CD4-positive, alpha-beta memory T cell (primary cell): ENCODE measurements at regions of chr19 and their contacts with region 1.

Region 1: GRCh38 chr19:8513687-8514504 is at the start of gene ZNF414:
- DNase-seq: peak; percentile 94 to 99 (median 97)
- H3K4me3 ChIP-seq: peak within 1 kb of the TSS; percentile 34 to 82
- H3K4me3 Mint-ChIP-seq: peak within 1 kb of the TSS; percentile 87 to 97 (median 94)
- H3K27ac ChIP-seq: peak within 1 kb of the TSS; percentile 93
- H3K27ac Mint-ChIP-seq: peak within 1 kb of the TSS; percentile 96 to 99 (median 99)
- H3K4me1 ChIP-seq: peaks cover 68% of the 10 kb centered on the region
- H3K4me1 Mint-ChIP-seq: peaks cover 30 to 67% (median 50%) of the 10 kb centered on the region in 4 donors
- H3K27me3 ChIP-seq: no peaks in the 10 kb centered on the region
- H3K27me3 Mint-ChIP-seq: no peaks in the 10 kb centered on the region
- total RNA-seq, gene ZNF414: 45.1 to 50.4 TPM

Region 2: DNA sequence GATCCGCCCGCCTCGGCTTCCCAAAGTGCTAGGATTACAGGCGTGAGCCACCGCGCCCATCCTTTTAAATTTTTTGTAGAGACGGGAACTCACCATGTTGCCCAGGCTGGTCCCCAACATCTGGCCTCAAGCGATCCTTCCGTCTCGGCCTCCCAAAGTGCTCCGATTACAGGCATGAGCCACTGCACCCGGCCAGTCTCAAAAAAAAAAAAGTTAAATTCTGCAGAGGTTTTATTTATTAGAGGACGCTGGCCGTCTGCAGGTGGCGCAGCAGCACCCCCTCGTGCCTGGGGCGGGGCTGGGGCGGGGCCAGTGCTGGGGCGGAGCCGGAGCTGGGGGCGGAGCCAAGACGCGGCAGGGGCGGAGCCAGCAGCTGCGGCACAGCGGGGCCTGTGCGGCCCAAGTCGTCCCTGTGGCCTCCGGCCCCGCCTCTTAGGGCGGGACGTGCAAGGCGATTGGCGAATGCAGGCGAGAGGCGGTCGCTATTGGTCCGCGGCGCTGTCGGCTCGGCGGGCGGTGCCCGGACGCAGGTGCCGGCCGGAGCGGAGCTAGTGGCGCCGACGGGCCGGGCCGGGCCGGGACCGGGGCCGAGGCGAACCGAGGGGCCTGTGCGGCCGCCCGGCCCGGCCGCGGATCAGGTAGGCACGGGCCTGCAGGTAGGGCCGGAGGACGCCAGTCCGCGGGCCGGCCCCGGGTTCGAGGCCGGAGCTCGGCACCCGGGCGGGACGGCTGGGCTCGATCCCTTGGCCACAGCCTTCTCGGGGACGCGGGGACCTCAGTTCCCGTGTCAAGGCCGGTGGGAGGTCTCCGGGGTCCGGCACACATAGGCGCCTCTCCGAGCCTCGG is 100.9 kb before region 1 on chr19 and contains the start of gene MARCHF2:
- CTCF ChIA-PET with region 1: interaction called, 6 read pairs
- POLR2A ChIA-PET with region 1: interaction called, 36 read pairs
- intact Hi-C with region 1: no loop called
- DNase-seq: peak; percentile 93 to 96 (median 95)
- H3K4me3 ChIP-seq: peak within 1 kb of the TSS; percentile 36 to 60
- H3K4me3 Mint-ChIP-seq: peak within 1 kb of the TSS; percentile 54 to 83 (median 78)
- H3K27ac ChIP-seq: peak within 1 kb of the TSS; percentile 55
- H3K27ac Mint-ChIP-seq: peak within 1 kb of the TSS in 5 of 7 donors; percentile 37 to 82 (median 53)
- H3K4me1 ChIP-seq: peaks cover 19% of the 10 kb centered on the region
- H3K4me1 Mint-ChIP-seq: peaks cover 8 to 15% (median 10%) of the 10 kb centered on the region in 4 donors
- H3K27me3 ChIP-seq: no peaks in the 10 kb centered on the region
- H3K27me3 Mint-ChIP-seq: no peaks in the 10 kb centered on the region
- total RNA-seq, gene MARCHF2: 25.5 to 30.3 TPM

Region 3: GRCh38 chr19:8487137-8487851 is 26.6 kb before region 1 on chr19:
- CTCF ChIA-PET with region 1: interaction called, 13 read pairs
- POLR2A ChIA-PET with region 1: interaction called, 55 read pairs
- intact Hi-C with region 1: no loop called
- DNase-seq: peak; percentile 66 to 76 (median 71)
- H3K4me3 ChIP-seq: no peak overlapping the region
- H3K4me3 Mint-ChIP-seq: peak overlapping the region; percentile 36 to 79 (median 66)
- H3K27ac ChIP-seq: peak overlapping the region; percentile 41
- H3K27ac Mint-ChIP-seq: peak overlapping the region; percentile 83 to 95 (median 89)
- H3K4me1 ChIP-seq: peaks cover 29% of the 10 kb centered on the region
- H3K4me1 Mint-ChIP-seq: peaks cover 24 to 50% (median 29%) of the 10 kb centered on the region in 4 donors
- H3K27me3 ChIP-seq: no peaks in the 10 kb centered on the region
- H3K27me3 Mint-ChIP-seq: no peaks in the 10 kb centered on the region

Region 4: DNA sequence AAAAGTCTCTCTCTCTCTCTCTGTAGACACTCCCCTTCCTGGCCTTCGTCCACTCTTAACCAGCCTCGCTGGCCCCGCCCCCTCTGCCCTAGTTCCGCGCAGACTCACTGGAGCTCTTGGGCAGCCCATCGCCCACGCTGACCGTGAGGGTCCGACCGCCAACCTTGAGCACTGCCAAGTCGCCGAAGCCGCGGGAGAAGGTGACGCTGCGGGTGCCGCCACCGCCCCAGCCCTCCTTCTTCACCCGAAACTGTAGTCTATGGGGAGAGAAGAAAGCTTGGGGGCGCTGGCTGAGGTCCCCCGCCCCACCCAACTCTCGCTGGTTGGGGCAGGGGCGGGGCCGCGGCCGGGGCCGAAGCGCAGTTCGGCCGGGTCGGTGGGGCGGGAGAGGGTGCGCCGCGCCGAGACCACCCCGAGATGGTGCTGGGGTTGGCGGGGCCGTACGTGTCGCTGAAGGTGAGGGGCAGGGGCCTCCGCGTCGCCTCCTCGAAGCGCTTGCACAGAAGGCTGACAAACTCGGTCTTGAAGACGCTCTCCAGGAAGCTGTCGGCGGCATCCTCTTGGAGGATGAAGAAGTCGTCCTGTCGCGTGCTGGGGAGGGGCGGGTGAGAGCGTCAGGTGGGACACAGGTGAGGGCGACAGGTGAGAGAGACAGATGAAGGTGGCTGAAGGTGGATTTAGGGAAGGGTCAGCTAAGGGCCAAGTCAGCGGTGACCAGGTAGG is 12.6 kb after region 1 on chr19:
- CTCF ChIA-PET with region 1: interaction called, 5 read pairs
- POLR2A ChIA-PET with region 1: interaction called, 122 read pairs
- intact Hi-C with region 1: no loop called
- DNase-seq: no peak
- H3K4me3 ChIP-seq: no peak overlapping the region
- H3K4me3 Mint-ChIP-seq: no peak overlapping the region
- H3K27ac ChIP-seq: no peak overlapping the region
- H3K27ac Mint-ChIP-seq: peak overlapping the region in 5 of 7 donors; percentile 16 to 92 (median 70)
- H3K4me1 ChIP-seq: peaks cover 4% of the 10 kb centered on the region
- H3K4me1 Mint-ChIP-seq: peaks cover 6 to 16% (median 13%) of the 10 kb centered on the region in 4 donors
- H3K27me3 ChIP-seq: no peaks in the 10 kb centered on the region
- H3K27me3 Mint-ChIP-seq: no peaks in the 10 kb centered on the region

Region 5: GRCh38 chr19:8569066-8569771 is 55.3 kb after region 1 on chr19:
- CTCF ChIA-PET with region 1: interaction called, 16 read pairs
- POLR2A ChIA-PET with region 1: interaction called, 461 read pairs
- intact Hi-C with region 1: loop called (anchors 2 kb)
- DNase-seq: peak; percentile 69 to 93 (median 77)
- H3K4me3 ChIP-seq: peak overlapping the region; percentile 36 to 60
- H3K4me3 Mint-ChIP-seq: peak overlapping the region; percentile 60 to 97 (median 83)
- H3K27ac ChIP-seq: peak overlapping the region; percentile 41
- H3K27ac Mint-ChIP-seq: peak overlapping the region; percentile 92 to 99 (median 95)
- H3K4me1 ChIP-seq: peaks cover 96% of the 10 kb centered on the region
- H3K4me1 Mint-ChIP-seq: peaks cover 44 to 88% (median 68%) of the 10 kb centered on the region in 4 donors
- H3K27me3 ChIP-seq: no peaks in the 10 kb centered on the region
- H3K27me3 Mint-ChIP-seq: no peaks in the 10 kb centered on the region